ENCODE measurements at regions of chr6 and their contacts with region 1.

Region 1: DNA sequence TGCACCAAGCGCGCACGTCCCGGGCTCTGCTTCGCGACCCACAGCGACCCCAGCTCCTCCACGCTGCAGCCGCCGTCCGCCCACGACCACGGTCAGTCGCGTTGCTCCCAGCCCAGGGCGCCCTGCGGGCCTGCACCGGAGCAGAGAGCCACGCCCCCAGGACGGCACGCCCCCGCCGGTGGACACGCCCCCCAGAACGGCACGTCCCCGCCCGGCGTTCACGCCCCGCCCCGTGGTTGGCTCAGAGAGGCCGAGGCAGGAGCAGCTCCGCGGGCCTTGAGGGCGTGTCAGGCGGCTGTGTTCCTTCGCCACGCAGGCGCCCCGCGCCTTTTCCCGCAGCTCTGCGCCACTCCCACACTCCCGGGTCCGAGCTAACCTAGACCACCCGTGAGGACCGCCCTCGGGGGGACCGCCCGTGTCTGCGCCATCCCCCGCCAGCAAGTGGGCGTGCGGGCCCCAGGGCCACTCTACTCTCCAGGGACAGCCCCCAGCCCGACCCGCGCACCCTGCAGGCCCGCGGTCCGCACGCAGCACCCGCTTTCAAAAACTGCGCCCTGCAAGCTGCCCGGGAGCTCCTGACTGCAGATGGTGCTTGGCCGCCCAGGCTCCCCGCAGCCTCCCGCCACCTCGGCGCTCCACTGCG is at the start of gene RNASET2:
- DNase-seq: peak; percentile 96 to 100 (median 97)
- H3K4me3 ChIP-seq: peak within 1 kb of the TSS; percentile 68 to 95
- H3K4me3 Mint-ChIP-seq: peak within 1 kb of the TSS; percentile 91 to 100 (median 97)
- H3K27ac ChIP-seq: peak within 1 kb of the TSS; percentile 92
- H3K27ac Mint-ChIP-seq: peak within 1 kb of the TSS; percentile 94 to 100 (median 98)
- H3K4me1 ChIP-seq: peaks cover 67% of the 10 kb centered on the region
- H3K4me1 Mint-ChIP-seq: peaks cover 57 to 79% (median 67%) of the 10 kb centered on the region in 4 donors
- H3K27me3 ChIP-seq: no peaks in the 10 kb centered on the region
- H3K27me3 Mint-ChIP-seq: no peaks in the 10 kb centered on the region
- total RNA-seq, gene RNASET2: 296 to 306 TPM

Region 2: GRCh38 chr6:166106076-166106686 is 850.4 kb before region 1 on chr6:
- CTCF ChIA-PET with region 1: no interaction called
- POLR2A ChIA-PET with region 1: no interaction called
- intact Hi-C with region 1: no loop called
- DNase-seq: peak in 3 of 5 donors; percentile 10 to 33 (median 32)
- H3K4me3 ChIP-seq: no peak overlapping the region
- H3K4me3 Mint-ChIP-seq: peak overlapping the region in 1 of 8 donors; percentile 14
- H3K27ac ChIP-seq: no peak overlapping the region
- H3K27ac Mint-ChIP-seq: no peak overlapping the region
- H3K4me1 ChIP-seq: no peaks in the 10 kb centered on the region
- H3K4me1 Mint-ChIP-seq: peaks cover 0 to 7% (median 2%) of the 10 kb centered on the region in 4 donors
- H3K27me3 ChIP-seq: no peaks in the 10 kb centered on the region
- H3K27me3 Mint-ChIP-seq: peaks cover 10 to 16% of the 10 kb centered on the region in 2 donors

Region 3: DNA sequence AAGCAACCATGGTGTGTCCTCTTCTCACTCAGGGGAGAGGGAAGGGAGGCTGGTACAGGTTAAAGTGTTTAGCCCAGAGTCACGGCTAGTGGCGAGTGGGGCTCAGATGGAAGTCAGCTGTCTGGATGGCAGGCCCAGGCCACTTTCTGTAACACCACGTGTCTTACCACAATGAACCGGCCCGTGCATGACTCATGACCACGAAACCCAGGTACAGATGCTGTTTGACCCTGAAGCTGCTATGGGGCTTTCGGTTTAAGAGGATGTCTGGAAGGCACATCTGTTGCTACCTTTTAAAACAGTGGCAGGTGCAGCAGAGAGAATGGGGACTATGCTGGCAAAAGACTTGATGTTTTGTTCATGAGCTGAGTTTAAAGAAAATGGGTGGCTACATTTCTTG is 537.3 kb before region 1 on chr6:
- CTCF ChIA-PET with region 1: no interaction called
- POLR2A ChIA-PET with region 1: interaction called, 3 read pairs
- intact Hi-C with region 1: loop called (anchors 10 kb)
- DNase-seq: peak; percentile 45 to 82 (median 53)
- H3K4me3 ChIP-seq: no peak overlapping the region
- H3K4me3 Mint-ChIP-seq: peak overlapping the region in 7 of 8 donors; percentile 55 to 79 (median 70)
- H3K27ac ChIP-seq: peak overlapping the region; percentile 42
- H3K27ac Mint-ChIP-seq: peak overlapping the region; percentile 96 to 99 (median 98)
- H3K4me1 ChIP-seq: peaks cover 74% of the 10 kb centered on the region
- H3K4me1 Mint-ChIP-seq: peaks cover 55 to 74% (median 68%) of the 10 kb centered on the region in 4 donors
- H3K27me3 ChIP-seq: no peaks in the 10 kb centered on the region
- H3K27me3 Mint-ChIP-seq: peaks cover 0 to 4% of the 10 kb centered on the region in 2 donors

Region 4: DNA sequence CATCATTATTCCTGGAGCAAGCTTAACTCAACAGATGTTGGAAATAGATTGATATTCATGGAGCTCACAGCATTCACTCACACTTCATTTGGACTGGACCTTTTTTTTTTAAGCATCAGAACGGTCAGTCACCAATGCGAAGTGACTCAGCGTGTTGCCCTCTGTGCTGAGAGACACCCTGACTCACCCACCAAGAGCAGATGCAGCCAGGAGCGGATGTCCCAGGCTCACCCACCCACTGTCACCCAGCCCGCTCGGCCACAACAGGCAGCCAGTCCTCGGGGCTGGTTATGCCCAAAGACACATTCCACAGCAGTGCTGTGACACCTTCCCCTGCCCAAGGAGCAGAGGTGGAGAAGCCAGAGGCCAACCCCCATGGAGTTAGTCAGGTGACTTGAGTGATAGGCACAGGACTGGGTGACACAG is 15.9 kb before region 1 on chr6:
- CTCF ChIA-PET with region 1: interaction called, 27 read pairs
- POLR2A ChIA-PET with region 1: interaction called, 63 read pairs
- intact Hi-C with region 1: loop called (anchors 2 kb)
- DNase-seq: no peak
- H3K4me3 ChIP-seq: no peak overlapping the region
- H3K4me3 Mint-ChIP-seq: no peak overlapping the region
- H3K27ac ChIP-seq: no peak overlapping the region
- H3K27ac Mint-ChIP-seq: peak overlapping the region in 4 of 7 donors; percentile 32 to 81 (median 39)
- H3K4me1 ChIP-seq: peaks cover 40% of the 10 kb centered on the region
- H3K4me1 Mint-ChIP-seq: peaks cover 30 to 55% (median 38%) of the 10 kb centered on the region in 4 donors
- H3K27me3 ChIP-seq: no peaks in the 10 kb centered on the region
- H3K27me3 Mint-ChIP-seq: no peaks in the 10 kb centered on the region

Region 5: DNA sequence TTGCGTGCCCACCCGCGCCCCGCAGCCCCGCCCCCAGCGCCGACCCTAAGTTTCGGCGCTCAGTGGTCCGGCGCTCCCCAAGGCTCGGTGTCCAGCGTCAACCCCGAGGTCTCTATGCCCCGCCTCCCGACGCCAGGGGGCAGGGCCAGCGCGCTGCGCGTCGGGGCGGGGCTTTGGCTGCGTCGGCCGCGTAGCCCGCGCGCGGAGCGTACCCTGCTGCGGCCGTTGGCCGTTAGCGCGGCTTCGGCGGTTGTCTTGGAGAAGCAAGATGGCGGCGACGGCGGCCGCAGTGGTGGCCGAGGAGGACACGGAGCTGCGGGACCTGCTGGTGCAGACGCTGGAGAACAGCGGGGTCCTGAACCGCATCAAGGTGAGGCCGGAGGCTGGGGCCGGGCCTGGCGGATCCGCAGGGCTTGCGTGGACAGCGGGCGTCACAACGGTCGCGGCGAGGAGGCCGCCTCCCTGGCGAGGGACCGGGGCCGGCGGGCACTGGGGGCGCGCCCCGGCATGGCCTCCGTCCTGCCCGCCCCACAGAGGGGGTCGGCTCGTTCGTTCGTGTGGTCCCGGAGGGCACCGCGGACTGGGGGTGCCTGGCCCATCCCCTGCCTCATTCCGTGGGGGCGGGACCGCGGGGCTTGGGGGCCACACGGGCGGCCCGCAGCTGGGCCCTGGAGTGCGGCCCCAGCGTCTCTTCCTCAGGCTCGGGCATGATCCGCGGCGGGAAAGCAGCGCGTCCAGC is 42.7 kb after region 1 on chr6 and contains the start of gene CEP43:
- CTCF ChIA-PET with region 1: interaction called, 7 read pairs
- POLR2A ChIA-PET with region 1: interaction called, 41 read pairs
- intact Hi-C with region 1: loop called (anchors 1 kb)
- DNase-seq: peak; percentile 81 to 89 (median 87)
- H3K4me3 ChIP-seq: peak within 1 kb of the TSS; percentile 85 to 95
- H3K4me3 Mint-ChIP-seq: peak within 1 kb of the TSS; percentile 90 to 95 (median 94)
- H3K27ac ChIP-seq: peak within 1 kb of the TSS; percentile 81
- H3K27ac Mint-ChIP-seq: peak within 1 kb of the TSS; percentile 65 to 93 (median 91)
- H3K4me1 ChIP-seq: peaks cover 38% of the 10 kb centered on the region
- H3K4me1 Mint-ChIP-seq: peaks cover 21 to 35% (median 30%) of the 10 kb centered on the region in 4 donors
- H3K27me3 ChIP-seq: no peaks in the 10 kb centered on the region
- H3K27me3 Mint-ChIP-seq: no peaks in the 10 kb centered on the region
- total RNA-seq, gene CEP43: 19.5 to 24.9 TPM

Region 6: DNA sequence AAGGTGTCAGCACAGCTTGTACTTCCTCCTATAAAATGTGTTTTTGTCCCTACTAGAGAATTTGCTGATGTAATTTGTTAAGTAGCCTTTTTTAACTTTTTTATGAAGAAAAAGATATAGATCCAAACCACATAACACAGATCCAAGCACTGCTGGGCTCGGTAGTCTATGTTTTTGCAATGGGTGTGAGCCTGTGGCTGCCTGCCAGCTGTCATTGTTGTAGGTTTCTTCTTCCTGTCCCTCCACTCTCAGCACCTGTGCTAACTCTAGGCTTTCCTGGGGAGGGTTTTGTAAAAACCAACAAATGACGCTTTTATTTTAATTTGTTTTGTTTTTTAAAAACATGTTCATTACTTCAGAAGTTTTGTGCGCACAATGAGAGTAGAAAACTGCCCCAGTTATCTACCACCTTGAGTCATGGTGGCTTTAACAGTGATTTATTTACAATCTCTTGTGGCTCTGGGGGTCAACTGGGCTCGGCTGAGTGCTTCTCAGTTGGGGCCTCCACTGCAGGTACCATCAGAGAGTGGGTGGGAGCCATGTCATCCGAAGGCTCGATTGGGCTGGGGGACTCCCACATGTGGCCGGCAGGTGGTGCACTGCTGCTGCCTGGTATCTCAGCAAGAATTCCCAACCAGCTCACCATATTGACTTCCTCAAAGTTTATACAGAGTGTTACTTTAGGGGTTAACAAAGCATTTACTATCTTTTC is 163.3 kb after region 1 on chr6:
- CTCF ChIA-PET with region 1: no interaction called
- POLR2A ChIA-PET with region 1: interaction called, 20 read pairs
- intact Hi-C with region 1: loop called (anchors 2 kb)
- DNase-seq: peak; percentile 85 to 91 (median 87)
- H3K4me3 ChIP-seq: peak overlapping the region in 1 of 2 donors; percentile 40
- H3K4me3 Mint-ChIP-seq: peak overlapping the region; percentile 65 to 85 (median 73)
- H3K27ac ChIP-seq: peak overlapping the region; percentile 63
- H3K27ac Mint-ChIP-seq: peak overlapping the region; percentile 94 to 98 (median 95)
- H3K4me1 ChIP-seq: peaks cover 85% of the 10 kb centered on the region
- H3K4me1 Mint-ChIP-seq: peaks cover 68 to 95% (median 79%) of the 10 kb centered on the region in 4 donors
- H3K27me3 ChIP-seq: no peaks in the 10 kb centered on the region
- H3K27me3 Mint-ChIP-seq: peaks cover 0 to 1% of the 10 kb centered on the region in 2 donors

Measured in CD4-positive, alpha-beta memory T cell (primary cell).